GM12878 (cell line): ENCODE measurements at regions of chr18 and their contacts with region 1.

Region 1: DNA sequence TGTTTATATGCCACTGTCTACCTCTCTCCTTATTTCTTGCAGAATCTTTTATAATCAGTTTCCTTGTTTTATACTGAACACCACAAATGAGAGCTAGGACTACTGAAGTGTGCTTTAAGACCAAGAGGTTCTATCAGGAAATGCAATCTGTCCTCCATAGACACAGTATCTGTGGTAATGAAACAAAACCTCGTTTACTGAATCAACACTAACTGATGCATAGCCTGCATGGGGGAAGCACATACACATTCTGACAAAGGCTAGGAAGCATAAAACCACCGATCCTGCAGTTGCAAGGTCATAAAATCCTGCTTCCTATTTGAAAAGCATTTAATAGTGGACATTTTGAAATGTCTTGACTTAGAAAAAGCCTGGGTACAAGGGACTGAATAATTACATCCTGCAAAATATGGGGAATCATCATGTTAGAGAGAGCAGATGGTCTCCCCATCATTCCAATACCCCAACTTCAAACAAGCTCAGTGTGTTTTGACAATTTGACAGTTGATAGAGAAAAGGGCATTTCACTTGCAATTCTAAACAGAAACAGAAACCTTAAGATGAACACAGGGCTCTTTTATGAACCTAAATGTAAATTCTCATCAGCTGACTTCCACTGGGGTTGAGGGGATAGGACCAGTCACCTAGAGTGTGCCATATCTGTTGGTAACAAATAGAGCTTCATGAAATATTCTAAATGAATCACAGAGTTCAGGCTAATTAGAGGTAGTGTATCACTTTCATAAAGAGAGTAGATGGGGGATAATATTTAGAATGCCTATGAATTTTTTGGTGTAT is 1845.6 kb upstream of the PIK3C3 start:
- DNase-seq: no peak
- ATAC-seq: peak; percentile 89
- H3K4me3 ChIP-seq: no peak overlapping the region
- H3K27ac ChIP-seq: no peak overlapping the region
- H3K4me1 ChIP-seq: no peaks in the 10 kb centered on the region
- H3K27me3 ChIP-seq: no peaks in the 10 kb centered on the region
- CTCF ChIP-seq: no peak
- EP300 ChIP-seq: no peak
- POLR2A ChIP-seq: no peak
- RAD21 ChIP-seq: no peak

Region 2: GRCh38 chr18:39862341-39862740 is 247.1 kb before region 1 on chr18:
- CTCF ChIA-PET with region 1: no interaction called
- POLR2A ChIA-PET with region 1: no interaction called
- RAD21 ChIA-PET with region 1: no interaction called
- SMC1A ChIA-PET with region 1: no interaction called
- in situ Hi-C with region 1: no loop called
- intact Hi-C with region 1: no loop called
- DNase-seq: no peak
- ATAC-seq: no peak
- H3K4me3 ChIP-seq: no peak overlapping the region
- H3K27ac ChIP-seq: no peak overlapping the region
- H3K4me1 ChIP-seq: no peaks in the 10 kb centered on the region
- H3K27me3 ChIP-seq: no peaks in the 10 kb centered on the region
- CTCF ChIP-seq: no peak
- EP300 ChIP-seq: no peak
- POLR2A ChIP-seq: no peak
- RAD21 ChIP-seq: no peak

Region 3: DNA sequence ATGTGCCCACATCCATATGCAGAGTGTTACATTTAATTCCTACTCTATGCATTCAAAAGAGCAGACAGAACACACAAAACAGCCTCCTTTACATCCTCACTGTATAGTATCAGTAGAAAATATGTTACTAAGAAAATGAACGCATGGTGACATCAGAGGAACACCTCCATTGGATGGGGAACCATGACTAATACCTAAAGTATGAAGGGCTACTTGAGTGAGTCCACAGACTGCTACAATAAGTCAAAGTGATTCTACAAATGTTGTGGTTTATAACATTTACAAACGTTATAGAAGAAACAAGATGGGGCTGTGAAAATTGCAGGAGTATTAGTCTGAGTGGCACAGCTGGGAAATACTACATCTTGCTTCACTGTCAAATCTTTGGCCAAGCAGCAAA is 14.7 kb after region 1 on chr18:
- CTCF ChIA-PET with region 1: interaction called, 6 read pairs
- POLR2A ChIA-PET with region 1: interaction called, 10 read pairs
- RAD21 ChIA-PET with region 1: interaction called, 9 read pairs
- SMC1A ChIA-PET with region 1: interaction called, 59 read pairs
- in situ Hi-C with region 1: no loop called
- intact Hi-C with region 1: no loop called
- DNase-seq: no peak
- ATAC-seq: peak; percentile 89
- H3K4me3 ChIP-seq: no peak overlapping the region
- H3K27ac ChIP-seq: no peak overlapping the region
- H3K4me1 ChIP-seq: no peaks in the 10 kb centered on the region
- H3K27me3 ChIP-seq: no peaks in the 10 kb centered on the region
- CTCF ChIP-seq: no peak
- EP300 ChIP-seq: peak in 1 of 2 experiments; percentile 29; a peak in 2 of 4 replicates
- POLR2A ChIP-seq: no peak
- RAD21 ChIP-seq: no peak

Region 4: DNA sequence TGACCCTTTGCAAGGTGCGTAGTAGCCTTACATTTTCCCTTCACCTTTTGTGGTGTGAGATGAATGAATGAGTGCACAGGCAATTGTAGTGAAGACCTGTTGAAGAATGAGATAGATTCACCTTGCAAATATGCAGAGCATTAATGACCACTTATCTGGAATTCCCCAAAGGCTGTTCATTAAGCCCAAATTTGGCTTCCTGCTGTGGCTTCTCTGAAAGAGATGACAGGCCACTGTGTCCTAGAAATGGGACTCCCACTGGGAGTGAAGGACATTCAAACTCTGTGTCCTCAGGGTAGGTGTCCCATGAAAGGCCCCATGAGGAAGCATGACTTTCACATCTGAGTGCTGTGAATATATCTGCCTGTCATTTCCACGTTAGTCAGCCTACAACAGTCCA is 23.8 kb after region 1 on chr18:
- CTCF ChIA-PET with region 1: interaction called, 3 read pairs
- POLR2A ChIA-PET with region 1: interaction called, 9 read pairs
- RAD21 ChIA-PET with region 1: interaction called, 19 read pairs
- SMC1A ChIA-PET with region 1: interaction called, 22 read pairs
- in situ Hi-C with region 1: no loop called
- intact Hi-C with region 1: loop called (anchors 1 kb)
- DNase-seq: no peak
- ATAC-seq: peak; percentile 70
- H3K4me3 ChIP-seq: no peak overlapping the region
- H3K27ac ChIP-seq: no peak overlapping the region
- H3K4me1 ChIP-seq: no peaks in the 10 kb centered on the region
- H3K27me3 ChIP-seq: no peaks in the 10 kb centered on the region
- CTCF ChIP-seq: no peak
- EP300 ChIP-seq: 0 out of 4 replicates have a peak, but pooled peaks of 1 of the 2 experiments have one; percentile 12
- POLR2A ChIP-seq: no peak
- RAD21 ChIP-seq: no peak